Esophagus muscularis mucosa (tissue), 4 donors: ENCODE measurements at regions of chr4 and their contacts with region 1.

Region 1: GRCh38 chr4:94757192-94758139 is at the start of gene BMPR1B:
- DNase-seq: no peak
- H3K4me3 ChIP-seq: peak within 1 kb of the TSS; percentile 74 to 94 (median 78)
- H3K27ac ChIP-seq: peak within 1 kb of the TSS; percentile 83 to 93 (median 92)
- H3K4me1 ChIP-seq: peaks cover 5 to 32% (median 28%) of the 10 kb centered on the region in 4 donors
- H3K27me3 ChIP-seq: peaks cover 0 to 6% (median 0%) of the 10 kb centered on the region in 4 donors
- CTCF ChIP-seq: no peak
- EP300 ChIP-seq: no peak
- POLR2A ChIP-seq: no peak
- total RNA-seq, gene BMPR1B: 11.3 to 22.0 (median 17.6) TPM

Region 2: DNA sequence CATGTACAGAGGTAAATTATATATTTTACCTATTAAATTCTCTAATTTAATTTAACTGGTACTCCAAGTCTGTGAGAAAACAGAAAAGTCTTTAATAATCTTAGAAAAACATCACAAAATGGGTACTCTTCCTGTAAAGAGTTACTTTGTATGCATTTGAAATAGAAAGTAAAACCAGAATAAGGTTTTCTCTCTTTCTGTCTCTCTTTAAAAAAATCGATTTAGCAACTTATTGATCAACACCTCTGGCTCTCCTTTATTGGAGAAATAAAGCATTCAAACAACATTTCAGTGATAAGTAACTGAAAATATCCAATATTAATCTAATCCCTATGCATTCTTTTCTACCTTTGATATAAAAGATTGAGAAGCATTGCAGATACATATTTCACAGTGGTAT is 901.5 kb before region 1 on chr4:
- intact Hi-C with region 1: no loop called
- DNase-seq: no peak
- H3K4me3 ChIP-seq: no peak overlapping the region
- H3K27ac ChIP-seq: no peak overlapping the region
- H3K4me1 ChIP-seq: no peaks in the 10 kb centered on the region
- H3K27me3 ChIP-seq: peaks cover 0 to 15% (median 0%) of the 10 kb centered on the region in 4 donors
- CTCF ChIP-seq: no peak
- EP300 ChIP-seq: no peak
- POLR2A ChIP-seq: no peak

Region 3: DNA sequence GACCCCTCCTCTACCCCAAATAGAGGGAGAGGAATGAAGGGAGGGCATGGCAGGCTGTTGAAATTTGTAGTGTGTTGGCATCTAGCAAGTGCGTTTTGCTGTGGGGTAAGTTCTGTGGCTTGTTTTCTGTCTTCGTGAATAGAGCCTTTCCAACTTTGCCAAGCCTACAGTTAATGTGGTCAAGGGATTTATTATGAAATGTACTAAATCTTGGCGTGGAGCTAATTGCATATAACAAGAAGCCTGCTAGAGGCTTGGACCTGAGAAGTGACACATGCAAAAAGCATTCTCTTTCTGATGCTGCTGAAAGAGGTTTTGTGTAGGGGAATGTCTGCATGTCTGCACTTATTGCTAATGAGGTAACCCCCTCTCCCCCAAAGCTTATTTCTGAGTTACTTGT is 132.5 kb after region 1 on chr4:
- intact Hi-C with region 1: loop called (anchors 10 kb)
- DNase-seq: no peak
- H3K4me3 ChIP-seq: no peak overlapping the region
- H3K27ac ChIP-seq: peak overlapping the region; percentile 10 to 57 (median 28)
- H3K4me1 ChIP-seq: peaks cover 0 to 21% (median 16%) of the 10 kb centered on the region in 4 donors
- H3K27me3 ChIP-seq: no peaks in the 10 kb centered on the region
- CTCF ChIP-seq: no peak
- EP300 ChIP-seq: no peak
- POLR2A ChIP-seq: no peak

Region 4: DNA sequence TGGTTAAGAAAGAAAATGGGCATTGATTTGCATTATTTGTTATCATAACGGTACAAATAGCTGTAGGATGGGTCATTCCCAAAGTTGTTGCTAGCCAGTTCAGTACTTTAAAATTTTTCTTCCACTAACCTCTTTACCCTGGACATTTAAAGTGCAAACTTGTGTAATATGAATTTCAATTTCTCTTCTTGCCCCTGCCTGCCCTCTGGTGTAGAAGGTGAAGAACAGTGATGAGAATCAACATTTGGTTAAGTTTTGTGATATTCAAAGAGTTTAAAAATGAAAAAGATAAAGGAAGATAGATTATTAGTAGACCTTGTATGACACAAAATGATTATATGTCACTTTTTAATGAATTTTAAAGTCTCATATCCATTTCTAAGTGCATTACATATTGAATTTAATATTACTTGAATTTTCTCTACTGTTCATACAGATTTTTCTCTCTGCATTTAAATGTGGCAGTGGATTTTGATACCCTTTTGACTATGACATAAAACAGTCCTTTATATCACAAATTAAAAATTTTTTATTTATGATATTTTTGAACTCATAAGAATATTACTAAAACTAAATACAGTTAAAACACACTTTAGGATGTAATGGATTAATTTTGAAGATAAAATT is 338.0 kb after region 1 on chr4:
- intact Hi-C with region 1: loop called (anchors 5 kb)
- DNase-seq: no peak
- H3K4me3 ChIP-seq: no peak overlapping the region
- H3K27ac ChIP-seq: no peak overlapping the region
- H3K4me1 ChIP-seq: peaks cover 0 to 26% (median 10%) of the 10 kb centered on the region in 4 donors
- H3K27me3 ChIP-seq: no peaks in the 10 kb centered on the region
- CTCF ChIP-seq: peak; percentile 59 to 65 (median 64)
- EP300 ChIP-seq: no peak
- POLR2A ChIP-seq: no peak